ENCODE measurements at regions of chr5 and their contacts with region 1.

Region 1: DNA sequence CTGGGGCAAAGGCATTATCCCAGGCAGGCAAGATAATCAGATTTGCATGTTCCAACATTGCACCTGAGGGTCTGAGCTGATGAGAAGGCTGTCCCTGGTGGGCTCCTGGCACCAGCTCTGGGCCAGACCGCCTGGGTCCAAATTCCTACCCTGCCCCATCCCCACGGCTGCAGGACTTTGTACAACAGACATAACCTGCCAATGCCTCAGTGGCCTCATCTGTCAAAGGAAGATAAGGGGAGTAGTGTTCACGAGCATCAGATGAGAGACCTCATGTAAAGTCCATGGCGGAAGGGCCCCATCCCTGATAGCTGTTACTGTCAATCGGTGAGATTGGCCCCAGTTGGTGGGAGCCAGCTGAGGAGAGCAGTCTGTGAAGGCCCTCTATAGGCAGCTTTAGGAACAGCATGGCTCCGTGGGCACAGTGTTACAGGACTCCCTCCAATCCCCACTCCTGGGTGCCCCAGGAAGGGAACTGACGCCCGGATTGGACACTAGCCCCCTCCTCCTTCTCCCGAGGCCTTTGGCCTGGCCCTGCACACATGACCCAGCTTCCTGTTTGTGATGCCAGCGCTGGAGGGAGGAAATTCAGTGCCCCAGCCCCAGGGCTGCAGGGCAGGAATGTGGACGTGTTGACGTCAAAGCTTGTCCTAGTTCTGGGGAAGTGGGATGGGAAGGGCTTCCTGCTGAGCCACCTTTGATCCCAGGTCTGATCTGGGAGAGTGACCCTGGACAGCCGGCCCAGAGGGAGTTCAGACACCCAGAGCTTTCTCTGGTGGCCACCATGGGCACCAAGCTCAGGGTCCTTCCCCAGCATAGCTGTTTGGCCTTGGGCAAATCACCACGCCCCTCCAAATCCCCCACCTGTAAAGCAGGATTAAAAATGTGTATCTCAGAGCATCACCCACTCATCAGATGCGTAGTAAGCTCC is 56.2 kb downstream of the DUSP1 start:
- DNase-seq: peak; percentile 81
- H3K4me3 ChIP-seq: no peak overlapping the region; a peak in 1 of 4 replicates
- H3K27ac ChIP-seq: no peak overlapping the region
- H3K4me1 ChIP-seq: peaks cover 0 to 12% of the 10 kb centered on the region in 2 experiments; a peak in 1 of 4 replicates
- H3K27me3 ChIP-seq: no peaks in the 10 kb centered on the region
- CTCF ChIP-seq: peak; percentile 81
- EP300 ChIP-seq: no peak
- RAD21 ChIP-seq: peak; percentile 56

Region 2: DNA sequence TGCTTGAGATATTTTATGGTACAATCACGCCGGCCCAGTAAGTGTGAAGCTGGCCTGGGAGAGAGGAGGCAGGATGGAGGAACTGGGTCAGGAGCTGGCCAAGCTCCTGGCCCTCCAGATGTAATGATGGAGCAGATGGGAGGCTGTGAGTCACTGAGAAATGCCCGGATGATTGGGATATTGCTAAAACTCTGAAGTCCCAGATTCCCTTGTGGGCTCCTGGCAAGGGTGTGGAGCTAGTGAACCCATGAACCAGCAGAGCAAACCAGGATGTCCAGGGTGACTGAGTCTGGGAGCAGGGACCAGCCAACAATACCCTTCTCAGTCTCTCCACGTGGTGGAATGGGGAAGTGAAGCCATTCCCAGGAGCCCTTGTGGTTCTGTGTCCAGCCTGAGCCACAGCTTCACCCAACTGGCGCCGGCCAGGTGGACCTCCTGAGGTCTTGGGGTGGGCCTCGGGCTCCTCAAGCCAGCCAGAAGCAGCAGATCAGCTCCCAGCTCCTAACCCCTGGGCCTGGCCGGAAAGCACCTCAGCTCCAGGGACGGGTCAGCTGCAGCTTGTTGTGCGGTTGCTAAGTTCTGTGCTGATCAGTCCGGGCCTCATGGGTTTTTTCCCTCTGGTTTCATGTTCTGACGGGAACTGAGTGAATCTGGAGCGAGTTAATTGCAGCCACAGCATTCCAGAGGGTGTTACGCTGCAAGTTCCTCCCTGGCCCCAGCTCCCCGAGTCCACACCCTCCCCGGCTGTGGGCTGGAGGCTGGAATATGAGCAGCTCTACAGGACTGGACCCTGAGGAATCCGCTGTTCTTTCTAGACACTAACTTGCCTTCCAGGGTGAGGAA is 18.6 kb after region 1 on chr5:
- CTCF ChIA-PET with region 1: interaction called, 31 read pairs
- POLR2A ChIA-PET with region 1: no interaction called
- DNase-seq: no peak
- H3K4me3 ChIP-seq: no peak overlapping the region
- H3K27ac ChIP-seq: no peak overlapping the region
- H3K4me1 ChIP-seq: no peaks in the 10 kb centered on the region
- H3K27me3 ChIP-seq: no peaks in the 10 kb centered on the region
- CTCF ChIP-seq: no peak
- EP300 ChIP-seq: no peak
- RAD21 ChIP-seq: no peak

Region 3: DNA sequence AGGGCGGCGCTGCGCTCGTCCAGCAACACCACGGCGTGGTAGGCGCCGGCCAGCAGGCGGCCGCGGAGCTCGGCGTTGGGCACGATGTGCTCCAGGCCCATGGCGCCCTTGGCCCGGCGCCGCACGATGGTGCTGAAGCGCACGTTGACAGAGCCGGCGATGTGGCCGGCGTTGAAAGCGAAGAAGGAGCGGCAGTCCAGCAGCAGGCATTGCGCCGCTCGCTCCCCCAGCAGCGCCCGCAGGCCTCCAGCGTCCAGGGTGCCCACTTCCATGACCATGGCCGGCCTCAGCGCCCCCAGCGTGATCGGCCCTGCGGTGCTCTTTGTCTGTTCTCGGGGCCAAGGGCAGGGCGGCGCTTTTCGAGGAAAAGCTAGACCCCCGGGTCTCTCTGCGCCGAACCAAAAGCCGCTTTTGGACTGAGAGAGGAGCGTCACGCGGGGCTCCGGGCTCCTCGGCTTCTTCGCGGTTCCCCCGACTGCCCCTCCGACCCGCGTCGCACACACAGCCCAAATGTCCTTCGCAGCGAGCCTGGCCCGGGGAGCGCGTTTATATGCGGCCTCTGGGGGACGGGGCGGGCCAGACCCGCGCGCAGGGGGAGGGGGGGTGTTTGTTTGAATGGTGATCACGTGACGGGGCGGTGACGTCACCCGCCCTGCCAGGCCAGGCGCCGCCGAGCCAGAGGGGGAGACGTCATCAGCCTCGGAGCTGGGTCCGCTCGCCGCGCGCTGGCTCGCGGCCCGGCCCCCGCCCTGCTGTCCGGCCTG is 56.1 kb after region 1 on chr5 and contains the start of gene DUSP1:
- CTCF ChIA-PET with region 1: interaction called, 113 read pairs
- POLR2A ChIA-PET with region 1: interaction called, 12 read pairs
- DNase-seq: peak; percentile 99
- H3K4me3 ChIP-seq: peak within 1 kb of the TSS; percentile 89 to 93
- H3K27ac ChIP-seq: peak within 1 kb of the TSS; percentile 97 to 100
- H3K4me1 ChIP-seq: peaks cover 23 to 36% of the 10 kb centered on the region in 2 experiments
- H3K27me3 ChIP-seq: no peaks in the 10 kb centered on the region
- CTCF ChIP-seq: peak; percentile 50
- EP300 ChIP-seq: no peak
- RAD21 ChIP-seq: peak; percentile 36
- polyA plus RNA-seq, gene DUSP1: 373 and 455 TPM in 2 replicates

Region 4: DNA sequence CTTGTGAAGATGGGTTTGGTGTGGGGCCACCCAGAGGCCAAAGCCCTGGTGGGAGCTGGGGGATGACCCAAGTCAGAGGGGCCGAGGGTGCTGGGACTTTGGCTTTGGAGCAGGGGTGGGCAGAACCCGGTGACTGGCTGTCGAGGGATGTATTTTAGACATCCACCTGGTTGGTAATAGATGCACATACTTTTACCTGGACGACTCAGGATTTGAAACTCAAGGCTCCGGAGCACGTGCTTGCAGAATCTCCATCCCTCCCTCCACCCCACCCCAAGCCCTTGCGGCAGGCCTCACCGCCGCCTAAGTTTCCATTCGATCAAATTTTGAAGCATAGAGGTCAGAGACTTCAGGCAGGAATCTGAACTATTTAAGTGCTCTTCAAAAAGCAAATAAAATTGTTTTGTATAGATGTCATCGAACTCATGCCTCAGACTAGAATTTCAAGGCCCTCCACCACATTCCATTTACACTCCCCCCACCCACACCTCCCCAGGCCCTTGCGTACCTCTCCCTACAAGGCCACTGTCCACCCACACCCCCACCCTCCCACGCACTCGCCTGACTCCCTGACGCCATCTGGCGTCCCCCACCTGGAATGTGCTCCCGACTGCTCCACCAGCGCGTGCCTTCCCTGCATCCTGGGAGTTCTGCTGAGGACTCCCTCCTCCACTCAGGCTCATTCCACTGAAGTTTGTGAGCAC is 187.9 kb after region 1 on chr5:
- CTCF ChIA-PET with region 1: interaction called, 23 read pairs
- POLR2A ChIA-PET with region 1: no interaction called
- DNase-seq: peak; percentile 72
- H3K4me3 ChIP-seq: no peak overlapping the region
- H3K27ac ChIP-seq: peak overlapping the region in 1 of 2 experiments; percentile 100; a peak in 2 of 4 replicates
- H3K4me1 ChIP-seq: peaks cover 30 to 68% of the 10 kb centered on the region in 2 experiments
- H3K27me3 ChIP-seq: no peaks in the 10 kb centered on the region
- CTCF ChIP-seq: peak; percentile 50
- EP300 ChIP-seq: no peak
- RAD21 ChIP-seq: peak; percentile 58

Region 5: GRCh38 chr5:172939071-172939470 is 224.3 kb after region 1 on chr5:
- CTCF ChIA-PET with region 1: interaction called, 508 read pairs
- POLR2A ChIA-PET with region 1: no interaction called
- DNase-seq: no peak
- H3K4me3 ChIP-seq: peak overlapping the region in 1 of 2 experiments; percentile 28; a peak in 1 of 4 replicates
- H3K27ac ChIP-seq: peak overlapping the region in 1 of 2 experiments; percentile 19; a peak in 1 of 4 replicates
- H3K4me1 ChIP-seq: peaks cover 0 to 24% of the 10 kb centered on the region in 2 experiments; a peak in 2 of 4 replicates
- H3K27me3 ChIP-seq: no peaks in the 10 kb centered on the region
- CTCF ChIP-seq: peak; percentile 54
- EP300 ChIP-seq: no peak
- RAD21 ChIP-seq: 0 out of 2 replicates have a peak, but pooled peaks have one; percentile 11